Psoas muscle (tissue), 8 donors: ENCODE measurements at regions of chr2 and their contacts with region 1.

Region 1: DNA sequence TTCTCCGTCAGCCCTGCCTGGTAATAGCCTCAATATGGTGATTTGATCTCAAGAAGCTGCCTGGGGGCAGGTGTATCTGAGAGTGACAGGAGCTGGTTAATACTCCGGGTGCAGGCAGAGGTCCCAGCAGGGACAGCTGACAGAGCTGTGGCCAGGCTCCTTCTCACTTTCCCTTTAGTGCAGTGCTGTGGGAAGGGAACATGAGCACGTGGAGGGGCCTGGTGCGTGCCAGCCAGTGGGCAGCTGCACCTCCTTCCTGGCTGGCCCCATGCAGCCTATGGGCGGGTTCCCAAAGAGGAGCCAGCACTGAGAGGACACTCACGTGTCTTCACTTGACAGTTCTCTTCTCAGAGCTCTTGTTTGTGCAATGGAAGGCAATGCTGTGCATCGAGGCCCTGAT is 9.1 kb downstream of the CNNM4 start:
- DNase-seq: peak; percentile 83 to 95
- ATAC-seq: peak; percentile 98 to 99 (median 98)
- H3K4me3 ChIP-seq: peak overlapping the region; percentile 46
- H3K27ac ChIP-seq: peak overlapping the region; percentile 74
- H3K4me1 ChIP-seq: peaks cover 28% of the 10 kb centered on the region
- H3K27me3 ChIP-seq: no peaks in the 10 kb centered on the region
- CTCF ChIP-seq: no peak

Region 2: GRCh38 chr2:96806468-96807126 is 36.8 kb after region 1 on chr2:
- intact Hi-C with region 1: loop called in 1 of 2 experiments (anchors 5 kb)
- DNase-seq: no peak
- ATAC-seq: no peak
- H3K4me3 ChIP-seq: no peak overlapping the region
- H3K27ac ChIP-seq: no peak overlapping the region
- H3K4me1 ChIP-seq: peaks cover 9% of the 10 kb centered on the region
- H3K27me3 ChIP-seq: no peaks in the 10 kb centered on the region
- CTCF ChIP-seq: no peak